T-cell (primary cell): ENCODE measurements at regions of chr15 and their contacts with region 1.

Region 1: GRCh38 chr15:77496710-77497103 is 76.0 kb downstream of the HMG20A start:
- DNase-seq: peak; percentile 30 to 79 (median 63)
- ATAC-seq: peak; percentile 58 to 75 (median 71)
- H3K4me3 ChIP-seq: no peak overlapping the region
- H3K4me3 Mint-ChIP-seq: no peak overlapping the region
- H3K27ac ChIP-seq: no peak overlapping the region
- H3K27ac Mint-ChIP-seq: no peak overlapping the region
- H3K4me1 ChIP-seq: peaks cover 7 to 12% of the 10 kb centered on the region in 2 experiments
- H3K4me1 Mint-ChIP-seq: peaks cover 15 to 31% (median 18%) of the 10 kb centered on the region in 3 donors
- H3K27me3 ChIP-seq: no peaks in the 10 kb centered on the region
- H3K27me3 Mint-ChIP-seq: no peaks in the 10 kb centered on the region

Region 2: GRCh38 chr15:77118882-77119321 is 377.8 kb before region 1 on chr15:
- CTCF ChIA-PET with region 1: interaction called, 4 to 13 read pairs
- POLR2A ChIA-PET with region 1: no interaction called
- DNase-seq: peak in 23 of 35 experiments; percentile 4 to 75 (median 24)
- ATAC-seq: peak in 3 of 4 experiments; percentile 43 to 70 (median 57)
- H3K4me3 ChIP-seq: no peak overlapping the region
- H3K4me3 Mint-ChIP-seq: no peak overlapping the region
- H3K27ac ChIP-seq: no peak overlapping the region
- H3K27ac Mint-ChIP-seq: no peak overlapping the region
- H3K4me1 ChIP-seq: peaks cover 0 to 3% of the 10 kb centered on the region in 2 experiments
- H3K4me1 Mint-ChIP-seq: peaks cover 5 to 10% (median 7%) of the 10 kb centered on the region in 3 donors
- H3K27me3 ChIP-seq: no peaks in the 10 kb centered on the region
- H3K27me3 Mint-ChIP-seq: no peaks in the 10 kb centered on the region

Region 3: GRCh38 chr15:77186594-77187011 is 310.1 kb before region 1 on chr15:
- CTCF ChIA-PET with region 1: interaction called in 1 of 2 experiments, 11 read pairs
- POLR2A ChIA-PET with region 1: no interaction called
- DNase-seq: peak in 9 of 35 experiments; percentile 2 to 54 (median 11)
- ATAC-seq: no peak
- H3K4me3 ChIP-seq: no peak overlapping the region
- H3K4me3 Mint-ChIP-seq: no peak overlapping the region
- H3K27ac ChIP-seq: no peak overlapping the region
- H3K27ac Mint-ChIP-seq: peak overlapping the region in 1 of 2 donors; percentile 8
- H3K4me1 ChIP-seq: peaks cover 14 to 19% of the 10 kb centered on the region in 2 experiments
- H3K4me1 Mint-ChIP-seq: peaks cover 26 to 53% (median 35%) of the 10 kb centered on the region in 3 donors
- H3K27me3 ChIP-seq: no peaks in the 10 kb centered on the region
- H3K27me3 Mint-ChIP-seq: no peaks in the 10 kb centered on the region